Mammary epithelial cell (primary cell): ENCODE measurements at regions of chr15 and their contacts with region 1.

Region 1: GRCh38 chr15:69854521-69855181 is 243.1 kb downstream of the TLE3 start:
- DNase-seq: no peak
- H3K4me3 ChIP-seq: no peak overlapping the region
- H3K27ac ChIP-seq: no peak overlapping the region
- H3K4me1 ChIP-seq: no peaks in the 10 kb centered on the region
- H3K27me3 ChIP-seq: peaks cover 2% of the 10 kb centered on the region
- CTCF ChIP-seq: no peak

Region 2: GRCh38 chr15:69794645-69795461 is 59.8 kb before region 1 on chr15:
- CTCF ChIA-PET with region 1: no interaction called
- dilution Hi-C with region 1: no loop called
- in situ Hi-C with region 1: no loop called
- intact Hi-C with region 1: no loop called
- DNase-seq: peak; percentile 53
- H3K4me3 ChIP-seq: no peak overlapping the region
- H3K27ac ChIP-seq: no peak overlapping the region
- H3K4me1 ChIP-seq: peaks cover 6% of the 10 kb centered on the region
- H3K27me3 ChIP-seq: peaks cover 3% of the 10 kb centered on the region
- CTCF ChIP-seq: no peak

Region 3: GRCh38 chr15:69909719-69910444 is 55.2 kb after region 1 on chr15:
- CTCF ChIA-PET with region 1: no interaction called
- dilution Hi-C with region 1: loop called (anchors 5 kb)
- in situ Hi-C with region 1: no loop called
- intact Hi-C with region 1: no loop called
- DNase-seq: no peak
- H3K4me3 ChIP-seq: no peak overlapping the region
- H3K27ac ChIP-seq: no peak overlapping the region
- H3K4me1 ChIP-seq: no peaks in the 10 kb centered on the region
- H3K27me3 ChIP-seq: no peaks in the 10 kb centered on the region
- CTCF ChIP-seq: no peak